SK-N-SH (cell line): ENCODE measurements at regions of chr3 and their contacts with region 1.

Region 1: GRCh38 chr3:160413613-160414248 is 14.3 kb downstream of the SMC4 start:
- DNase-seq: peak; percentile 64
- H3K4me3 ChIP-seq: no peak overlapping the region; a peak in 1 of 4 replicates
- H3K27ac ChIP-seq: peak overlapping the region in 1 of 2 experiments; percentile 44; a peak in 2 of 4 replicates
- H3K4me1 ChIP-seq: peaks cover 0 to 4% of the 10 kb centered on the region in 2 experiments; a peak in 2 of 4 replicates
- H3K27me3 ChIP-seq: no peaks in the 10 kb centered on the region
- CTCF ChIP-seq: peak; percentile 90
- EP300 ChIP-seq: no peak
- RAD21 ChIP-seq: peak; percentile 89

Region 2: GRCh38 chr3:160038862-160039562 is 374.7 kb before region 1 on chr3:
- CTCF ChIA-PET with region 1: interaction called, 29 read pairs
- POLR2A ChIA-PET with region 1: no interaction called
- DNase-seq: peak; percentile 76
- H3K4me3 ChIP-seq: peak overlapping the region; percentile 47 to 57
- H3K27ac ChIP-seq: no peak overlapping the region
- H3K4me1 ChIP-seq: peaks cover 0 to 5% of the 10 kb centered on the region in 2 experiments; a peak in 1 of 4 replicates
- H3K27me3 ChIP-seq: no peaks in the 10 kb centered on the region
- CTCF ChIP-seq: no peak
- EP300 ChIP-seq: no peak
- RAD21 ChIP-seq: no peak

Region 3: GRCh38 chr3:160265073-160265472 is 148.7 kb before region 1 on chr3:
- CTCF ChIA-PET with region 1: no interaction called
- POLR2A ChIA-PET with region 1: no interaction called
- DNase-seq: no peak
- H3K4me3 ChIP-seq: no peak overlapping the region
- H3K27ac ChIP-seq: no peak overlapping the region
- H3K4me1 ChIP-seq: 0 out of 4 replicates have a peak, but pooled peaks cover 0 to 3% of the 10 kb centered on the region in 2 experiments
- H3K27me3 ChIP-seq: no peaks in the 10 kb centered on the region
- CTCF ChIP-seq: no peak
- EP300 ChIP-seq: no peak
- RAD21 ChIP-seq: no peak

Region 4: GRCh38 chr3:160399125-160400029 is 14.4 kb before region 1 on chr3 and contains the starts of genes IFT80 and SMC4:
- CTCF ChIA-PET with region 1: interaction called, 11 read pairs
- POLR2A ChIA-PET with region 1: interaction called, 3 read pairs
- DNase-seq: peak; percentile 92
- H3K4me3 ChIP-seq: peak within 1 kb of the TSS; percentile 79 to 96
- H3K27ac ChIP-seq: peak within 1 kb of the TSS; percentile 88 to 94
- H3K4me1 ChIP-seq: peaks cover 10 to 12% of the 10 kb centered on the region in 2 experiments; a peak in 2 of 4 replicates
- H3K27me3 ChIP-seq: no peaks in the 10 kb centered on the region
- CTCF ChIP-seq: no peak
- EP300 ChIP-seq: peak; percentile 5 to 39; a peak in 1 of 4 replicates
- RAD21 ChIP-seq: no peak
- polyA plus RNA-seq, gene IFT80: 10.5 and 17.4 TPM in 2 replicates
- polyA plus RNA-seq, gene SMC4: 18.8 and 26.1 TPM in 2 replicates

Region 5: GRCh38 chr3:160427832-160428424 is 14.2 kb after region 1 on chr3:
- CTCF ChIA-PET with region 1: interaction called, 10 read pairs
- POLR2A ChIA-PET with region 1: no interaction called
- DNase-seq: no peak
- H3K4me3 ChIP-seq: no peak overlapping the region
- H3K27ac ChIP-seq: peak overlapping the region in 1 of 2 experiments; percentile 1; a peak in 2 of 4 replicates
- H3K4me1 ChIP-seq: no peaks in the 10 kb centered on the region; a peak in 1 of 4 replicates
- H3K27me3 ChIP-seq: no peaks in the 10 kb centered on the region
- CTCF ChIP-seq: no peak
- EP300 ChIP-seq: no peak
- RAD21 ChIP-seq: no peak

Region 6: GRCh38 chr3:160607826-160608225 is 194.1 kb after region 1 on chr3:
- CTCF ChIA-PET with region 1: no interaction called
- POLR2A ChIA-PET with region 1: no interaction called
- DNase-seq: no peak
- H3K4me3 ChIP-seq: no peak overlapping the region
- H3K27ac ChIP-seq: no peak overlapping the region
- H3K4me1 ChIP-seq: no peaks in the 10 kb centered on the region
- H3K27me3 ChIP-seq: no peaks in the 10 kb centered on the region
- CTCF ChIP-seq: no peak
- EP300 ChIP-seq: no peak
- RAD21 ChIP-seq: no peak